AG04450 (cell line): ENCODE measurements at regions of chr10 and their contacts with region 1.

Region 1: GRCh38 chr10:29522061-29522855 is 112.5 kb downstream of the SVIL start:
- DNase-seq: no peak
- H3K4me3 ChIP-seq: no peak overlapping the region
- H3K27ac ChIP-seq: peak overlapping the region; percentile 47
- H3K27me3 ChIP-seq: no peaks in the 10 kb centered on the region
- CTCF ChIP-seq: no peak

Region 2: DNA sequence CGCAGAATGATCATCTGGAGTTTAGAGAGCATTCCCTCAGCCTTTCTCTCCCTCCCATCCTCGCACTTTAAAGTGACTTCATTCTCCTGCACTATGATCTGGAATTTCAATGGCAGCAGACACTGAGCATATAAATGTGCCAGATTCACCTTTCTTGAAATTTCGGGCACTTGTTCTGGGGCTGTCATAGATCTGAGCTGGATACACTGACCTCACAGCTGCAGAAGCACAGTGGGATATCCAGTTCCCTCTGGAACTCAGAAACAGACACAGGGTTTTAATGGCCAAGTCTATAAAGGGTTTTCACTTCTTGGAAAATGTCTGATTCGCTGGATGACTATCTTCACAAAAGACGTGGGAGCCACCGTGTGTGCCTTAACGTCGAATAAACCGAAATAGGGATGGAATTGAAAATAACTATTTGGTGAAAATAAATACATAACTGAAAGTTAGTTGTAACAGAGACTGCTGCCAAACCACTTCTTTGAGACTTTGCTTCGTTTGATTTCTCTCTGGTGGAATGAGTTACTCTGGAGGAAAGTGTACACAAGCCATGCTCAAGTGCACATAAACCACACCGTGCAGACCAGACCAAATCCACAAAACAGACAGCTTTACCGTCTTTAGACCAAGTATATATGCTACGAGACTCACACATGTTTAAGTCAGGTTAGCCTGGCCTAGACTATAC is 13.6 kb before region 1 on chr10:
- CTCF ChIA-PET with region 1: interaction called, 27 read pairs
- POLR2A ChIA-PET with region 1: no interaction called
- DNase-seq: no peak
- H3K4me3 ChIP-seq: no peak overlapping the region
- H3K27ac ChIP-seq: no peak overlapping the region
- H3K27me3 ChIP-seq: no peaks in the 10 kb centered on the region
- CTCF ChIP-seq: no peak

Region 3: DNA sequence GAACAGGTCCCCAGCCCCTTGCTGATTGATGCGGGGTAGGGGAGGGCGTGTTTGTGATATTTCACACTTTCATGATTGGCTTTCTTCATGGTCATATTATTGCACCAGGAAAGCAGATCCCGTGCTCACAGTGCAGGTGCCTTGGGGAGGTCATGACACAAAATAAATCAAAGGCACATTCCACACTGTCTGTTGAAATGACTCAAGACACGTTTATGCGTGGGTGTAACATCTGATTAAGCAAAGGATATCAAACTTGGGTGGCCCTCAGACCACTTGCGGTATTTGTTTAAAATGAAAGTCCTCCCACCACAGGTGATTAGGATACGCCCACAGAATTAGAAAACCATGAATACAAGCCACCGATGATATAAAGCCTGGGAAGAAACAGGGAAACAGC is 61.4 kb after region 1 on chr10:
- CTCF ChIA-PET with region 1: no interaction called
- POLR2A ChIA-PET with region 1: no interaction called
- DNase-seq: no peak
- H3K4me3 ChIP-seq: no peak overlapping the region
- H3K27ac ChIP-seq: peak overlapping the region; percentile 80
- H3K27me3 ChIP-seq: no peaks in the 10 kb centered on the region
- CTCF ChIP-seq: no peak

Region 4: GRCh38 chr10:29608062-29608461 is 85.8 kb after region 1 on chr10:
- CTCF ChIA-PET with region 1: no interaction called
- POLR2A ChIA-PET with region 1: no interaction called
- DNase-seq: no peak
- H3K4me3 ChIP-seq: no peak overlapping the region
- H3K27ac ChIP-seq: no peak overlapping the region
- H3K27me3 ChIP-seq: no peaks in the 10 kb centered on the region
- CTCF ChIP-seq: no peak